Ascending aorta (tissue), 2 donors: ENCODE measurements at regions of chr16 and their contacts with region 1.

Region 1: GRCh38 chr16:27367461-27368357 is 34.3 kb upstream of the IL21R start:
- DNase-seq: peak; percentile 43 to 87
- H3K4me3 ChIP-seq: peak overlapping the region; percentile 13 to 41
- H3K27ac ChIP-seq: peak overlapping the region; percentile 44 to 59
- H3K4me1 ChIP-seq: peaks cover 0 to 5% of the 10 kb centered on the region in 2 donors
- H3K27me3 ChIP-seq: no peaks in the 10 kb centered on the region
- CTCF ChIP-seq: peak; percentile 53 to 85 (median 81)

Region 2: GRCh38 chr16:27154705-27155521 is 212.8 kb before region 1 on chr16:
- intact Hi-C with region 1: loop called (anchors 1 kb)
- DNase-seq: peak in 1 of 2 donors; percentile 63
- H3K4me3 ChIP-seq: no peak overlapping the region
- H3K27ac ChIP-seq: no peak overlapping the region
- H3K4me1 ChIP-seq: no peaks in the 10 kb centered on the region
- H3K27me3 ChIP-seq: no peaks in the 10 kb centered on the region
- CTCF ChIP-seq: peak; percentile 78 to 95 (median 92)

Region 3: GRCh38 chr16:27179500-27180072 is 188.1 kb before region 1 on chr16:
- intact Hi-C with region 1: loop called (anchors 2 kb)
- DNase-seq: peak; percentile 21 to 91
- H3K4me3 ChIP-seq: no peak overlapping the region
- H3K27ac ChIP-seq: no peak overlapping the region
- H3K4me1 ChIP-seq: no peaks in the 10 kb centered on the region
- H3K27me3 ChIP-seq: no peaks in the 10 kb centered on the region
- CTCF ChIP-seq: peak; percentile 80 to 88 (median 87)

Region 4: DNA sequence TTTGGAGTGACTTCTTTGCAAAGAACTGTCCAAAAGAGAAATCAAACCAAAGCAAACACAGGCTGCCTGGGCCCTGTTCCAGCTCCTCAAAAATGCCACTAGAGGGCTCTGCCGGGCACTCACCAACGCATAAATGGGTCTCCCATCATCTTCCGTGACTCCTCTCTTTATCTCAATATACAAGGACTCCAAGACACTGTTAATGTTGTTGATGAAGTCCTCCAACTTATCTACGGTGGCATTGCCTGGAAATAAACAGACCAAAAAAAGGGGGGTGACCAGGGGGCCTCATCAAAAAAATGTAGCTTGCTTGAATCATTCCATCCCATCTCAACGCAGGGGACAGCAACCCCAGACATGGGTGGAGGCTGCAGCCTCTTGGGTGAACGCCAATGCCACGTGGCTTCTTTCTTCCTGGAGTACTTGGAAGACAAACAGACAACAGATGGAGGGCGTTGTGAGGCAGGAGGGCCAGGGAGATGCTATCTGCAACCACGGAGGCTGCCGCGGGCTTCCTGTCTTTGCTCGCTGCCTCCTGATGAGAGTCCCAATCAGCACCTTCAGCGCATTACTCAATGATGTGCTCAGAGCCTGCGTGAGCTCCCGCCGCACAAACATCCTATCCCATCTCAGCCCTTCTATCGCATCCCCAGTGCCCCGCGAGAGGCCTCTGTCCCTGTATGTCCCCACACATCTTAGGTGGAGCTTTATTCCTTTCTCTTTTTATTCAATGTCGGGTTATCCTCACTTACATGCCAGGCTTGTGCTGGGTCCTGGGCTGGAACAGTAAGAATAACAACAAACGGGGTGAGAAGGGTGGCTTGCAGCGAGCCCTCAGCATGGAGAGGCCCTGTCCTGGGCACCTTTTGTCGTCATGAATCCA is 132.4 kb before region 1 on chr16:
- intact Hi-C with region 1: loop called (anchors 1 kb)
- DNase-seq: peak; percentile 71 to 88
- H3K4me3 ChIP-seq: peak overlapping the region in 1 of 2 donors; percentile 0
- H3K27ac ChIP-seq: peak overlapping the region; percentile 58 to 68
- H3K4me1 ChIP-seq: peaks cover 0 to 11% of the 10 kb centered on the region in 2 donors
- H3K27me3 ChIP-seq: no peaks in the 10 kb centered on the region
- CTCF ChIP-seq: peak; percentile 71 to 82 (median 74)

Region 5: DNA sequence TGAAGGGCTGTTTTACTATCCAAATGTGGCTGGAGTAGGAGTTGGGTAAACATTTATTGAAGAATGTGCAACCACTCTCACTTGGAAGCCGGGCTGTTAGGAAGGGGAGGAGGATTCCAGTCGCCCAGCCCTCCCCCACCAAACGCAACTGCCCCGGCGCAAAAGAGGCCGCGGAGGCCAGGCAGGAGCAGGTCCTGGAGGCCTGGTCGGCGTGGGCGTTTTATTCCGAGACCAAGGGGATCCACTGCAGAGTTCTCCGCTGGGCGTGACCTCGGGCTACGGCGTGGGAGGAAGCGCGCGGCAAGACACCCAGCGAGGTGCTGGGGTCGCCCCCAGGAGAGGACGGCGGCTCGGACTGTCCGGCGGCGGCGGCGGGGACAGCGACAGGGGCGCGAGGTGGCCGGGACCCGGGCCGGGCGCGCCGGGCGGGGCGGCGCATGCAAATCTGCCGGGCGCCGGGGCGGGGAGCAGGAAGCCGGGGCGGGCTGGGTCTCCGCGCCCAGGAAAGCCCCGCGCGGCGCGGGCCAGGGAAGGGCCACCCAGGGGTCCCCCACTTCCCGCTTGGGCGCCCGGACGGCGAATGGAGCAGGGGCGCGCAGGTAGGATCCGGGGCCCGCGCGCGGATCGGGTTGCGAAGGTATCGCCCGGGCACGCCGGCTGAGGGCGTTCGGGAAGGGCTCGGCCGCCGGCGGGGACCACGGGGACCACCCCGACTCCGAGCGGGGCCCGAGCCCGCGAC is 54.1 kb before region 1 on chr16 and contains the start of gene IL4R:
- intact Hi-C with region 1: loop called (anchors 10 kb)
- DNase-seq: peak; percentile 31 to 89
- H3K4me3 ChIP-seq: peak within 1 kb of the TSS; percentile 85 to 90
- H3K27ac ChIP-seq: peak within 1 kb of the TSS; percentile 93 to 98
- H3K4me1 ChIP-seq: peaks cover 3 to 18% of the 10 kb centered on the region in 2 donors
- H3K27me3 ChIP-seq: no peaks in the 10 kb centered on the region
- CTCF ChIP-seq: no peak
- total RNA-seq, gene IL4R: 88.7 TPM

Region 6: GRCh38 chr16:27339180-27339579 is 28.5 kb before region 1 on chr16:
- intact Hi-C with region 1: loop called (anchors 2 kb)
- DNase-seq: no peak
- H3K4me3 ChIP-seq: no peak overlapping the region
- H3K27ac ChIP-seq: no peak overlapping the region
- H3K4me1 ChIP-seq: no peaks in the 10 kb centered on the region
- H3K27me3 ChIP-seq: no peaks in the 10 kb centered on the region
- CTCF ChIP-seq: no peak

Region 7: DNA sequence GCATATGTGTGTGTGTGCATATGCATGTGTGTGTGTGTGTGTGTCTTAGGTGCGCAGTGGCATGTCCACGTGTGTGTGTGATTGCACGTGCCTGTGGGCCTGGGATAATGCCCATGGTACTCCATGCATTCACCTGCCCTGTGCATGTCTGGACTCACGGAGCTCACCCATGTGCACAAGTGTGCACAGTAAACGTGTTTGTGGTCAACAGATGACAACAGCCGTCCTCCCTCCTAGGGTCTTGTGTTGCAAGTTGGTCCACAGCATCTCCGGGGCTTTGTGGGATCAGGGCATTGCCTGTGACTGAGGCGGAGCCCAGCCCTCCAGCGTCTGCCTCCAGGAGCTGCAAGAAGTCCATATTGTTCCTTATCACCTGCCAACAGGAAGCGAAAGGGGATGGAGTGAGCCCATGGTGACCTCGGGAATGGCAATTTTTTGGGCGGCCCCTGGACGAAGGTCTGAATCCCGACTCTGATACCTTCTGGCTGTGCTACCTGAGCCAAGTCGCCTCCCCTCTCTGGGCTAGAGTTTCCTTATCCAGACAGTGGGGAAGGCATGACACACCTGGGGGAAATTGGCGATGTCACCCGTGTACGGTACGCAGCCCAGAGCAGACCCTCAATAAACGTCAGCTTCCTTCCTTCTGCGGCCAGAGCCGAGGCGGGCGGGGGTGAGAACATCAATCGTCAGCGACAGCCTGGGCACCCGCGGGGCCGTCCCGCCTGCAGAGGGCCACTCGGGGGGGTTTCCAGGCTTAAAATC is 81.9 kb after region 1 on chr16:
- intact Hi-C with region 1: no loop called
- DNase-seq: no peak
- H3K4me3 ChIP-seq: no peak overlapping the region
- H3K27ac ChIP-seq: no peak overlapping the region
- H3K4me1 ChIP-seq: no peaks in the 10 kb centered on the region
- H3K27me3 ChIP-seq: no peaks in the 10 kb centered on the region
- CTCF ChIP-seq: no peak